Left cardiac atrium (tissue), 4 donors: ENCODE measurements at regions of chr19 and their contacts with region 1.

Region 1: DNA sequence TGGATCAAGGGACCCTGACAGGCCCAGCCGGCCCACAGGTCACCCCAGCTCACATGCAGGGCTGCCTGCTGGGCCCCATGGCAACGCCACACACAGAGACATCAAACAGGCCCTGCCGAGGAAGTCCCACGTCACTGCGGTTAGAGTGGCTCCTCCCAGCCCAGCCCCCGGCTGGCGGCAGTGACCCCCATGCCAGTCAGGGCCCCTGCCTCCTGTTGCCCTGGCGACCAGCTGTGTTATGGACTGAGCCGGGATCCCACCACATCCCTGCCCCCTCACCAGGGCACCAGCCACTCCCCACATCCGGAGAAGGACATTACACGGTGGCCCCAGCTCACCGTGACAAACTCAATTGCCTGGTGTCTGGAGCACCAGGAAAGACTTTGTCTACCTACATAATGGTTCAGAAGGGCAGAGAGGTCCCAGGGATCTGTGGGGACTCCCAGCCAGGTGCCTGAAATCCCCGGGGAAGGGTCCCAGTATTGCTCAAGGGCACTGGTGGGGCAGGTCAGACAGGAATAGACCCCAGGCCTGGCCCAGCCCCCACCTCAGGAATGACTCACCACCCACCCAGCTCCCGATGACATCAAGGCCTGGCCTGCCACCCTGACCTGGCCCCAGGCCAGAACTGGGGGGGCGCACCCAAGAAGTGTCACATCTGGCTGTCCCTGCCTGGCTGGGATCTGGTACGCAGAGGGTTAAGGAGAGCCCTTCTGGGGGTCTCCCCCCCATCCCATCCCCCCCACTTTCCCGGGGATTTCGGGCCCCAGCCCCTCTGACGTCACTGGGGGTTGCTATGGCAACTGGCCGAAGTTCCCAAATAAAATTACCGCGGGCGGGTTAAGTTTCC is 30.2 kb upstream of the NANOS3 start:
- DNase-seq: peak; percentile 94
- ATAC-seq: peak; percentile 43 to 63

Region 2: DNA sequence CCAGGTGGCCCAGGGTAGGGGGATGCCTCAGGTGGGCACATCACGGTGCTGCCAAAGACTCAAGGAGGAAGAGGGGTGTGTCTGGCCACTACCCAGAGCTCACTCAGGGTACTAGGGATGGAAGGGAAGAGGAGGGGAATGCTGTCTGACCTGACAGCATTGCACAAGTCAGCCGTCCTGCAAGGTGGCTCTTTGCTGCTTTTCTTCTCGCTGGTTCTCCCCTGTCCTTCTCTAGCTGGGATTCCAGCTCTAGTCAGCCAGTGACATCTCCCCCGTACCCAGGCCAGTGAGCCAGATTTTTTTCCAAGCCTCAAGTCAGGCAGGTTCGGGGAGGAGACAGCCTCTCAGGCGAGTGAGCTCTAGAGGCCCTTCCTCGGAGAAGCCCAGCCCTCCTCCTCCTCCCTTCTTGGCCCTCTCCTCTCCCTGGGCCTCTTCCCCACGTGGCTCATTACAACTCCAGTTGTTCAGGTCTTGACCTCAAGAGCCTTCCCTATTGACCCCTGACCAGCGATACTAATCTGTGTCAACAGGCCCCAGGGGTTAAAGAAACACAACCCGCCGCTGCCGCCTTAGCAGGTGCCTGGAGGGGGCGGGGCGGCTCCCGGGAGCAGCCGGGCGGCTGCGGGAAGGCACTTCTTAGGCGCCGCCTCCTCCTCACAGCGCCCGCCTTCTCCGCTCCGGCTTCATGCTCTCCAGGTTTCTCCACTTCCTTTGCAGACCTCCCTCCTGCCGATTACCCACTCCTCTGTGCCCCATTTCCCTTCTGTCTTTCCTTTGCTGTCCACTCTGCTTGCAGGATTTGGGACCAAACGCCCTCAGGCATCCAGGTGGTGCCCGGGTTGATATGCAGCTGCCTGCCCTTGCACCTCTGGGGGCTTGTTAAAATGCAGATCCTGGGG is 795.3 kb before region 1 on chr19:
- intact Hi-C with region 1: loop called in 1 of 2 experiments (anchors 10 kb)
- DNase-seq: no peak
- ATAC-seq: peak; percentile 17 to 31

Region 3: GRCh38 chr19:13150187-13150930 is 696.4 kb before region 1 on chr19 and contains the starts of genes IER2 and STX10:
- intact Hi-C with region 1: loop called in 1 of 2 experiments (anchors 10 kb)
- DNase-seq: peak; percentile 97
- ATAC-seq: peak; percentile 68 to 70
- total RNA-seq, gene IER2: 36.9 to 61.3 TPM
- total RNA-seq, gene STX10: 30.0 to 36.1 TPM